ENCODE measurements at regions of chr2 and their contacts with region 1.

Region 1: GRCh38 chr2:39059366-39059952 is 61.4 kb downstream of the SOS1 start:
- DNase-seq: peak; percentile 71
- H3K4me3 ChIP-seq: no peak overlapping the region
- H3K27ac ChIP-seq: no peak overlapping the region
- H3K4me1 ChIP-seq: no peaks in the 10 kb centered on the region
- H3K27me3 ChIP-seq: no peaks in the 10 kb centered on the region
- CTCF ChIP-seq: peak; percentile 75

Region 2: GRCh38 chr2:39124000-39124745 is 64.7 kb after region 1 on chr2:
- CTCF ChIA-PET with region 1: no interaction called
- POLR2A ChIA-PET with region 1: no interaction called
- intact Hi-C with region 1: loop called (anchors 5 kb)
- DNase-seq: peak; percentile 99
- H3K4me3 ChIP-seq: peak overlapping the region; percentile 68
- H3K27ac ChIP-seq: peak overlapping the region; percentile 92
- H3K4me1 ChIP-seq: peaks cover 7% of the 10 kb centered on the region
- H3K27me3 ChIP-seq: no peaks in the 10 kb centered on the region
- CTCF ChIP-seq: peak; percentile 57

Region 3: DNA sequence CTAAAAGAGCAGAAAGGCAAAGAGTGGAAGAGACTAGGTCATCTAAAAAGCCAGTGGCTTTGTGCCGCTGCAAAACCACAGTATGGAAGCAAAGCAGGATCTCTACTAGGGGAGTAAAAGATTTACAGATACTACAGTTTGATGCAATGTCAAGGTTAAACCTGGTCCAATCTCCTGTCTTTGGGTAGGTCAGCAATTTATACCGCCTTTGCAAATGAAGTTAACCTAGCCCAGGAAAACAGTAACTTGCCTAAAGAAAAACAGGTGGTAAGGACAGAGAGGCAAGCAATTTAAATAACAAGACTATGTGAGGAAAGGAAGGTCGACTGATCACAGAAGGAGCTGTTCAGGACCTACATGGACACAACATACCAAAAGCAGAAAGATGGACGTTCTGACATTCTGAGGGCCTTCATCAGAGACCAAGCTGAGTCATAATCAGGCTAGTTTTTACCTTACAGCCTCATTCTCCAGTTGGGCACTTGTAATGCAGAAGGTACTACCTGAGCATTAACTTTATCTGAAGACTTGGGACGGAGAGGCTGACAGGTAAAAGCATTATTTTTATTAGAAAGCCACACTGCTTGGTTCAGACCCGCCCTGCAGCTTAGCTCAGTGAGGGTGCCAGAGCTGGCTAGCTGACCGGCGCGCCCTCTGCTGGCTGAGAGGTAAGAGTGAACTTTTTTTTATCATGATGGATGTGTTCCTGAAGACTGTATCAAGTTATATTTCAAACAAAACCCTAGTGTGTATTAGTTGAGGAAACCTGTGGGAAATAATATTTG is 168.4 kb after region 1 on chr2:
- CTCF ChIA-PET with region 1: interaction called, 4 read pairs
- POLR2A ChIA-PET with region 1: no interaction called
- intact Hi-C with region 1: loop called (anchors 1 kb)
- DNase-seq: peak; percentile 77
- H3K4me3 ChIP-seq: peak overlapping the region; percentile 27
- H3K27ac ChIP-seq: no peak overlapping the region
- H3K4me1 ChIP-seq: no peaks in the 10 kb centered on the region
- H3K27me3 ChIP-seq: no peaks in the 10 kb centered on the region
- CTCF ChIP-seq: peak; percentile 92

Region 4: GRCh38 chr2:39488450-39488849 is 429.0 kb after region 1 on chr2:
- CTCF ChIA-PET with region 1: no interaction called
- POLR2A ChIA-PET with region 1: no interaction called
- intact Hi-C with region 1: no loop called
- DNase-seq: no peak
- H3K4me3 ChIP-seq: no peak overlapping the region
- H3K27ac ChIP-seq: no peak overlapping the region
- H3K4me1 ChIP-seq: peaks cover 11% of the 10 kb centered on the region
- H3K27me3 ChIP-seq: no peaks in the 10 kb centered on the region
- CTCF ChIP-seq: no peak

Region 5: DNA sequence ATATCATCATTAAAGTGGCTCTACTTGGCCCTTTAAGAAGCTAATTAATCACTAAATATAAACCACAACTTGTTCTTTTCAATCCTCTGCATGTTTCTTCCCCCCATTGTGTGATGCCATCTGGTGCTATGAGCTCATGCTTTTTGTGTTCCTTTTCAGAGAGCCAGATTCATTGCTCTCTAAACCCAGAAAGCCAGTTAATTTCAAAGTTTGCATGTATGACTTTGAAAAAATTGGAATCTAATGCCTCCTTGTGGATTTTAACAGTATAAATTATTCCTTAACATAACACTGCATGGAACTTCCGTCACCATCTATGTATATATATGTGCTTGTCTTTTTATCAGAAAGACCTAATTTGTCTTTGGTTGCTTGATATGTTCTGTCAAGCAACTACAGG is 637.4 kb after region 1 on chr2:
- CTCF ChIA-PET with region 1: no interaction called
- POLR2A ChIA-PET with region 1: no interaction called
- intact Hi-C with region 1: loop called (anchors 10 kb)
- DNase-seq: peak; percentile 79
- H3K4me3 ChIP-seq: no peak overlapping the region
- H3K27ac ChIP-seq: no peak overlapping the region
- H3K4me1 ChIP-seq: peaks cover 10% of the 10 kb centered on the region
- H3K27me3 ChIP-seq: no peaks in the 10 kb centered on the region
- CTCF ChIP-seq: peak; percentile 56

Region 6: GRCh38 chr2:39728941-39729351 is 669.5 kb after region 1 on chr2:
- CTCF ChIA-PET with region 1: no interaction called
- POLR2A ChIA-PET with region 1: no interaction called
- intact Hi-C with region 1: loop called (anchors 10 kb)
- DNase-seq: peak; percentile 65
- H3K4me3 ChIP-seq: no peak overlapping the region
- H3K27ac ChIP-seq: no peak overlapping the region
- H3K4me1 ChIP-seq: peaks cover 27% of the 10 kb centered on the region
- H3K27me3 ChIP-seq: no peaks in the 10 kb centered on the region
- CTCF ChIP-seq: peak; percentile 95

Region 7: DNA sequence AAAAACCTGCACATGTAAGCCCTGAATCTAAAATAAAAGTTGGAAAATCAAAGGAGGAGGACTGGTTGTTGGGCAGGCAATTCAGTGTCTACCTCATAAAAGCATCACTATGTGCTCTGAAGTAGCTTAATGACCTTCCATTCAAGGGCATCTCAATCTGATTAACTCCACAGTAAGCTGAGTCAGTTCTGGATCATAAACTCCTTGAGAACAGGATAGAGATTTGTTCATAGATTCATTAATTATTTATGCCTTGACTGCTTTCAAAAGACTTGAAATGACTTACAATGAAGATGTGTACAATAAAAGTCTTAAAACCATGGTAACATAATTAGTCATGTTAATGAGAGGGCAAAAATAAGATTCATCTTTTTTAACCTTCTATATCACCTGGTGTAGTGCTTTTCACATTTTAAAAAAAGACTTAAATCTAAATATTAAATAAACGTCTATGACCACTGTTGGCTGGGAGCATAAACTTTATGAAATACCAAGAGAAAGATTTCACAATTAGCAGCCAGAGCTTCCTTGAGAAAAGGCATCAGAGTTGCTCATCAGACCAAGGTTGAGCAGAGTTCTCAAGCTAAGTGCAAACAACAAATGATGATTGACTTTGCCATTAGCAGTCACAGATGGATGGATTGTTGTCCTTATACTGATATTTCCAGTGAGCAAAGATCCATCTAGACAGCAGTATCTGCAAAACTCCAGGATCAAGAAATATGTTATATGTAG is 956.9 kb after region 1 on chr2:
- CTCF ChIA-PET with region 1: no interaction called
- POLR2A ChIA-PET with region 1: no interaction called
- intact Hi-C with region 1: no loop called
- DNase-seq: peak; percentile 10
- H3K4me3 ChIP-seq: no peak overlapping the region
- H3K27ac ChIP-seq: no peak overlapping the region
- H3K4me1 ChIP-seq: no peaks in the 10 kb centered on the region
- H3K27me3 ChIP-seq: no peaks in the 10 kb centered on the region
- CTCF ChIP-seq: no peak